Left ventricle myocardium inferior (tissue), 1 donor: ENCODE measurements at regions of chr2 and their contacts with region 1.

Region 1: GRCh38 chr2:135916207-135916606 is 40.0 kb upstream of the MCM6 start:
- DNase-seq: no peak
- H3K4me3 ChIP-seq: no peak overlapping the region
- H3K27ac ChIP-seq: no peak overlapping the region
- H3K4me1 ChIP-seq: peaks cover 3% of the 10 kb centered on the region
- H3K27me3 ChIP-seq: no peaks in the 10 kb centered on the region
- CTCF ChIP-seq: peak; percentile 60

Region 2: DNA sequence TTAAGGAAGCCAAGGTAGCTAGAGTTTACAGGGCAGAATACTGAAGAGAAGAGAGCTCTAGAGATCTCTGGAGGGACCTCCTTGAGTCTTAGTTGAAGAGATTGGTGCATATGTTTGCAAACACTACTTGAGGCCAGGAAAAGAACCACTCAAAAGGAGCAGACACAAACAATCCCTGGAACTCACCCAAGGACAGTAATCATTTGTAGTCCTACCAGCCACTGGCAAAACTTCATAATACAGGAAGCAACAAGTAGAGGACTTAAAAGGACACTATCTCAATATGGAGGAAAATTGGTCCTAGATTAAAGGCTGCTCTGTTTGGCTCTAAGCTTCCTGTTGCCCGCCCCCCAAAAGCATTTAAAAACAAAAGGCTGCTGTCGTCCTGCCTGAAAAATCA is 221.5 kb before region 1 on chr2:
- intact Hi-C with region 1: no loop called
- DNase-seq: no peak
- H3K4me3 ChIP-seq: no peak overlapping the region
- H3K27ac ChIP-seq: no peak overlapping the region
- H3K4me1 ChIP-seq: peaks cover 13% of the 10 kb centered on the region
- H3K27me3 ChIP-seq: no peaks in the 10 kb centered on the region
- CTCF ChIP-seq: no peak

Region 3: GRCh38 chr2:135728064-135728743 is 188.0 kb before region 1 on chr2:
- intact Hi-C with region 1: no loop called
- DNase-seq: no peak
- H3K4me3 ChIP-seq: no peak overlapping the region
- H3K27ac ChIP-seq: no peak overlapping the region
- H3K4me1 ChIP-seq: no peaks in the 10 kb centered on the region
- H3K27me3 ChIP-seq: no peaks in the 10 kb centered on the region
- CTCF ChIP-seq: no peak

Region 4: GRCh38 chr2:136019306-136019705 is 103.1 kb after region 1 on chr2:
- intact Hi-C with region 1: no loop called
- DNase-seq: no peak
- H3K4me3 ChIP-seq: no peak overlapping the region
- H3K27ac ChIP-seq: no peak overlapping the region
- H3K4me1 ChIP-seq: peaks cover 22% of the 10 kb centered on the region
- H3K27me3 ChIP-seq: no peaks in the 10 kb centered on the region
- CTCF ChIP-seq: no peak

Region 5: DNA sequence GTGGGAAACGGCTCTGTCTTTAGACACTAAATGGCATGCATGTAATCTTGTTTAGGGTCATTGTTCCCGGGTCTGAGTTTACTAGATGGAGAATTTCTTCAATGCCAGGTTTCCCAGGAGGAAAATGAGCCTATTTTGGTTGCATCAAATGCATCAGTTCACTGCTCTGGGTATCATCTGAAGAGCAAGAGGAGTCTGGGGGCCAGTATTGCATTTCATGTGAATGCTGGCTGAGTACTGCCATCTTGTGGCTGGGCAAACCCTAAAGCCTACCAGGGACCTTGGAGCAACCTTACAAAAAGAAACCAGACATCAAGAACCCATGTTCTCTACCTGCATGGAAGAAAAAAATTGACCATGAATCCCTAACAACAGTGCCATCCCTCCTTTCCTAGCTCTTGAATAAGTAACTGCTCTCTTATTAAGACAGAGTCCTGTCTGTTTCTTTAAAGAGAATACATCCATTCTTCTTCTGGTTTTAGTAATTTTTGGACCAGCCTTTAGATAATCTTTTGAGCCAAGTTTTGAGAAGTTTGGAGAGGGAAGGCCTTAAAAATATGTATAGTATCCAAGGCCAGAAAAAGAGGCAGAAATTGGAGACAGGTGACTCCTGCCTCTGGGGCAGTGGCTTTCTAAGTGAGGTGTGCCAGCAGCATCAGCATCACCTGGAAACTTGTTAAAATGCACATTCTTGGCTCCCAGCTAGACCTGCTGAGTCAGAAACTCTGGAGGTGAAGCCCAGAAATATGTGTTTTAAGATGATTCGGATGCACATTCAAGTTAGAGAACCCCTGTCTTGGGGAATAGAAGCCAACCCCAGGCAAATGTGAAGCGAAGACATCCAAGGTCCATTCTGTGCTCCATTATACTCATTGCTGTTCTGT is 462.7 kb after region 1 on chr2:
- intact Hi-C with region 1: loop called (anchors 5 kb)
- DNase-seq: peak; percentile 29
- H3K4me3 ChIP-seq: no peak overlapping the region
- H3K27ac ChIP-seq: no peak overlapping the region
- H3K4me1 ChIP-seq: peaks cover 24% of the 10 kb centered on the region
- H3K27me3 ChIP-seq: no peaks in the 10 kb centered on the region
- CTCF ChIP-seq: peak; percentile 78